ENCODE measurements at regions of chr17 and their contacts with region 1.

Region 1: DNA sequence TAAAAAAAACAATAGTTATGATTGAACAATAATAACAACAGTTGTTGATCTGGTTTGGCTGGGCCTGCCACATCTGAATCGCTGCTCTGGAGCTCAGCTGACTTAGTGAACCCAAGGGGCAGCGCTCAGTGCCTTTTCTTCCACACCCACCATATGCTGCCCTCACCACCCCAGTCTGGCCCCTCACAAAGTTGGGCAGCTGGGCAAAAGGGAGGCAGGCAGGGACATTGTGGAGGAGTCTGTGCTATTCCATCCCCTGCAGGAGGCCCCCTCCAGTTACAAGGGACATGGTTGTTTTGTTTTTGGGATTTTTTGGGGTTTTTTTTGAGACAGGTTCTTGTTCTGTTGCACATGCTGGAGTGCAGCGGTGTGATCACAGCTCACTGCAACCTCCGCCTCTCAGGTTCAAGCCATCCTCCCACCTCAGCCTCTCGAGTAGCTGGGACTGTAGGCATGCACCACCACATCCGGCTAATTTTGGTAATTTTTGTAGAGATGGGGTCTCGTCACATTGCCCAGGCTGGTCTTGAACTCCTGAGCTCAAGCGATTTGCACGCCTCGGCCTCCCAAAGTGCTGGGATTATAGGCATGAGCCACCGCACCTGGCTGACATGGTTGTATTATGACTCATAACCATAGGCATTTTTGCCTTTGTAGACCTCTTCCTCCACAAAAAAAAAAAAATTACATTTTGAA is 8.6 kb upstream of the PECAM1 start:
- DNase-seq: peak; percentile 50
- H3K4me3 ChIP-seq: no peak overlapping the region
- H3K27ac ChIP-seq: no peak overlapping the region
- H3K4me1 ChIP-seq: peaks cover 6% of the 10 kb centered on the region
- H3K27me3 ChIP-seq: no peaks in the 10 kb centered on the region
- CTCF ChIP-seq: no peak

Region 2: DNA sequence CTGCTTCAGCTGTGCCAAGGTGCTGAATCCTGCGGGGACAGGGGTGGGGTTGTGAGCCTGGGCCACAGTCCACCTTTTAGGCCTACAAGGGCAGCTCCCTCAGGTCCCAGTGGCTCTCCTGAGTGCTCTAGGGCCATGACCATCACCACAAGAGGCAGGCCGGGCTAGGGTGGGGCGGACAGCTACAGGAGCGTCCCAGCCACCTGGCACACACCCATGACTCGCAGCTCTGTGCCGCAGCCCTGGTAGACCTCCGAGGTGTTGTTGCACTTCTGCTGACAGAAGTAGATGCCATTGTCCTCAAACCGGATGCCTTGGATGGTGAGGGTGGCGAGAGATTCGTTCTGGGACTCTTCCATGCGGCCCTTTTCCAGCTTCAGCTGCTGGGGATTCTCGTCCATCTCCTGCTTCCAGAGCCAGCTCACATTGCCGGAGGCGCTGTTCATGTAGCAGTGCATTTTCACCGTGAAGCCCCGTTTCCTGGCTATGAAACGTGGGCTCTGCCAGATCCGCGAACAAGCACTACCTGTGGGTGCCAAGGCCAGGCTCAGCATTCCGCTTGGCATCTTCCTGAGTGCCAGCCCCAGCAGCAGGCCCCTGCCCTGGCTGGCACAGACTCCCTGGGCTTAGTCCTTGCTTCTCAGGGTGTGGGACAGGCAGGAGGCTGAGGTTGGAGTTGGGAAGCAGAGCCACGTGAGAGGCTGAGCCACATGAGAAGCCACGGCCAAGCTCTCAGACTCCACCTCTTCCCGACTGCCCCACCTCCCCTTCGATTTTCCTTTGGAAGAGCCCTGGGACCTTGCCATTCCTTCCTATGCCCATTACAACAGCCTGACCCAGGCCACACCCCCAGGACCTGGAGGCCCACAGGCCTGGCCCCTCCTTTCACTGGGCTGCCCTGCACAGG is 469.1 kb before region 1 on chr17:
- CTCF ChIA-PET with region 1: no interaction called
- dilution Hi-C with region 1: loop called (anchors 10 kb)
- in situ Hi-C with region 1: no loop called
- intact Hi-C with region 1: no loop called
- DNase-seq: no peak
- H3K4me3 ChIP-seq: no peak overlapping the region
- H3K27ac ChIP-seq: no peak overlapping the region
- H3K4me1 ChIP-seq: peaks cover 18% of the 10 kb centered on the region
- H3K27me3 ChIP-seq: no peaks in the 10 kb centered on the region
- CTCF ChIP-seq: no peak

Region 3: GRCh38 chr17:64063766-64064224 is 335.4 kb before region 1 on chr17:
- CTCF ChIA-PET with region 1: no interaction called
- dilution Hi-C with region 1: loop called (anchors 10 kb)
- in situ Hi-C with region 1: no loop called
- intact Hi-C with region 1: no loop called
- DNase-seq: no peak
- H3K4me3 ChIP-seq: no peak overlapping the region
- H3K27ac ChIP-seq: no peak overlapping the region
- H3K4me1 ChIP-seq: peaks cover 6% of the 10 kb centered on the region
- H3K27me3 ChIP-seq: no peaks in the 10 kb centered on the region
- CTCF ChIP-seq: peak; percentile 20 to 33

Region 4: DNA sequence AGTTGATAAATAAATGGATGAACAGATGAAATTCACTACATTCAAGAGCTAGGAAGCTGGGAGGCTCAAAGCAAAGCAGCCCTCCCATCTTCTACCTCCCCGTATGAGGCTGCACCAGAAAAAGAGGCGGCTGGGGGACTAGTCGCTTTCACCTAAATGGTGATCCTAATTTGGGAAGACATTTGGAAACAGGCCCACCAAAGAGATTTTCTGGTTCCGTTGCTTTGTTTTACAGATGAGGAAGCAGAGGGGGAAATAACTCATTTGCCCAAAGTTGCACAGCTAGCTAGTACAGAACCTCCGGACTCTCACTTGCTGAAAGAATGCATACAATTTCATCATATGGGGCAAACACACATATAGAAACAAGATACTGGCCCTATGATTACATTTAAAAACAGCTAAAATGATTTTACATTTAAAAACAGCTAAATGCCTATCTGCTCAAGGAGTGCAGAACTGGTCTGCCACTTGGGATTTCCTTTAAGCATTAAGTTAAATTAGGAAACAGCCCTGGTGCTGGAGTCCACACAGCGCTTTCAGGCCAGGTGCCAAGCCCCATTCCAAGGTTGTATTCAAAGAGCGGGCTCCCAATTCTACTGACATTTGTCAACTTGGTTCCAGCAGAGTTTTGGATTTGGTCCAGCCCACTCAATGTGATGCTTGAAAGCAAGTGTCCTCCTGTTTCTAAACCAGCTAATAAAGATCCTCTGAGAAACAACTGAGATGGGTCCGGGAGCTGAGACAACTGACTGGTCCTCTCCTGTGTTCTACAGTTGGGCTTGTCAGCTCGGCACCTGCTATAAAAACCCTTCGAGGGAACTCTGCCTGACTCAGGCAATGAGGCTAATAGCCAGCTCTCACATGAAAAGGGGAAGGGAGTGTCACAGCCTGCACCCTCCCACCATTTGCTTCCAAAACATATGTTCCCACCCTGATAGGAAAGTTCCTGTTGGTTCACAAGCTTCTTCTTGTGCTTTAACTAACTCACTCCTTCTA is 280.9 kb before region 1 on chr17:
- CTCF ChIA-PET with region 1: no interaction called
- dilution Hi-C with region 1: loop called (anchors 10 kb)
- in situ Hi-C with region 1: no loop called
- intact Hi-C with region 1: no loop called
- DNase-seq: no peak
- H3K4me3 ChIP-seq: no peak overlapping the region
- H3K27ac ChIP-seq: no peak overlapping the region
- H3K4me1 ChIP-seq: peaks cover 24% of the 10 kb centered on the region
- H3K27me3 ChIP-seq: no peaks in the 10 kb centered on the region
- CTCF ChIP-seq: no peak

Region 5: GRCh38 chr17:64240741-64241347 is 158.4 kb before region 1 on chr17:
- CTCF ChIA-PET with region 1: no interaction called
- dilution Hi-C with region 1: loop called (anchors 10 kb)
- in situ Hi-C with region 1: no loop called
- intact Hi-C with region 1: no loop called
- DNase-seq: peak; percentile 65
- H3K4me3 ChIP-seq: no peak overlapping the region
- H3K27ac ChIP-seq: peak overlapping the region; percentile 11
- H3K4me1 ChIP-seq: peaks cover 49% of the 10 kb centered on the region
- H3K27me3 ChIP-seq: no peaks in the 10 kb centered on the region
- CTCF ChIP-seq: no peak

Region 6: DNA sequence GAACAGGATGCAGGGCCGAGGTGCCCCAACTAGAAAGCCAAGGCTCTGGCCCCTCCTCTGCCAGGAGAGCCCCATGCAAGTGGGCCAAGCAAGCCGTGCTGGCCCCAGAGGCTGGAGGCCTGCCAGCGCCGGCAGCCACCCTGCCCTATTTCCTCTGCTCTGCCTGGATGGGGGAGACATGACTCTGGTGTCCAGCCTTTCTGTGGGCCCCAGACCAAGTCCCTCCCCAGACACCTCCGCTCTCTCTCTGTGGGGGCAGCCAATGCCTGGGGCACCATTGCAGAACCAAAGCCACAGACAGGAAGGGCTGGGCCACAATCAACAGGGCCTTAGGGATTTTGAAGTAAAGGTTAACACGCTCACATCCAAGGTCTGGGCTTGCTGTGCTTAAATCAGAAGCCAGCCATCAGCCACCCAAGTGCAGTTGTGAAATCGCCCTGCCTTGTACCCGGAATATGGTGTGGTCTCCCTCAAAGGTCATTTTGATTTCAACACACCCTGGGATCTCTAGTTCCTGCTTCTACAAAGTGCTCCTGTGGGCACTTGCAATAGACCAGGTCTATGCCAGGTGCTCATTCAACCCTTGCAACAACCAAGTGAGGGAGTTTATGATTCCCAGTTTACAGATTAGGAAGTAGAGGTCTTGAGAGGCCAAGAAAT is 72.7 kb before region 1 on chr17:
- CTCF ChIA-PET with region 1: no interaction called
- dilution Hi-C with region 1: loop called (anchors 5 kb)
- in situ Hi-C with region 1: no loop called
- intact Hi-C with region 1: no loop called
- DNase-seq: peak; percentile 77
- H3K4me3 ChIP-seq: no peak overlapping the region
- H3K27ac ChIP-seq: no peak overlapping the region
- H3K4me1 ChIP-seq: peaks cover 17% of the 10 kb centered on the region
- H3K27me3 ChIP-seq: no peaks in the 10 kb centered on the region
- CTCF ChIP-seq: no peak

Region 7: DNA sequence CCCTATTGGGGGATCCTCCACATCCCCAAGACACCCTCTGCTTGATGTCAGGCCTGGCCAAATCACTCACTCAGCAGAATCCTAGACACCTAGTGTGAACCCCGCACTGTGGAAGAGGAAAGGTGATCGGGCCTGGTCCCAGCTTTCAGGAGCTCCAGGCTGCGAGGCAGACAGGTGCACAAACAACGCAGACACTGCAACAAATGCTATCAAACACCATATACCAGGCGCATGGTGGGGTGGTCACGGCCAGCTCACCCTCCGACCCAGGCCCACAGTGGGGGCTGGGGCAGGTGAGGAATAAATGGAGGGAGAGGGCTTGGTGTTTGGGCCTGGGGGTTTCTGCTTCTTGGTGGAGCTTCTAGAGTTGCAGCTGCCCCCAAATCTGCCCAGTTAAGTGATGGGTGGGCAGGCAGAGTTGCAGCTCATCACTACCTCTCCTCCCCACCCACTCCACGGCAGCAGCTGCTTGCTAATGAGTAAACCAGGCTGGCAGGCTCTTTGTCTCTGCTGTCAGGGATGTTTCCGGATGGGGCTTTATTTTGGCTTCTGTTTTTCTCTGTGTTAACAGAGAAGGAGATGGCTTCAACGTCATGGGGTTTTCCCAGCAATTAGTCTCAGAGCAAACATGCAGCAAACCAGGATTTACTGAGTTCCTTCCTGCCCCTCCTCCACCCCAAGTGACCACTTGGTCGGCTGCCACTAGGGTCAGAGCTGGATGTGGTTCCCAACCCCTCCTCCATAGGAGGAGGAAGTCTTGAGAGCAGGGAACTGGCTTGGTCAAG is 55.2 kb before region 1 on chr17:
- CTCF ChIA-PET with region 1: no interaction called
- dilution Hi-C with region 1: no loop called
- in situ Hi-C with region 1: no loop called
- intact Hi-C with region 1: no loop called
- DNase-seq: peak; percentile 50
- H3K4me3 ChIP-seq: no peak overlapping the region
- H3K27ac ChIP-seq: no peak overlapping the region
- H3K4me1 ChIP-seq: no peaks in the 10 kb centered on the region
- H3K27me3 ChIP-seq: no peaks in the 10 kb centered on the region
- CTCF ChIP-seq: no peak

Region 8: DNA sequence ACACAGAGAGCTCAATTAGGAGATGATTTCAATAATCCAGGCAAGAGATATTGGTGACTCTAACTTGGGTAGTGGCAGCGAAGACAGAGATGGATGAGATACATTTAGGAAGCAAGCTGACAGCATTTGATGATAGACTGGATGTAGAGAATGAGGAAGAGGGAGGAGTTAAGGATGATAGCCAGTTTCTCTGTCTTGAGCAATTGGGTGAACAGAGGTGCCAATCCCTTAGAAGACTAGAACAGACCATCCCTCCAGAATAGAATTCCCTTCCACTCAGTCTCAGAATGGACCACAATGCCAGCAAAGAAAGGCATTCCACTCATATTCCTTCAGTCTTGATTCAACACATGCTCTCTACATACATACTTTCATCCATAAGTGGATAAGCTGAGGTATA is 80.4 kb after region 1 on chr17:
- CTCF ChIA-PET with region 1: no interaction called
- dilution Hi-C with region 1: loop called (anchors 5 kb)
- in situ Hi-C with region 1: no loop called
- intact Hi-C with region 1: no loop called
- DNase-seq: no peak
- H3K4me3 ChIP-seq: no peak overlapping the region
- H3K27ac ChIP-seq: no peak overlapping the region
- H3K4me1 ChIP-seq: no peaks in the 10 kb centered on the region
- H3K27me3 ChIP-seq: no peaks in the 10 kb centered on the region
- CTCF ChIP-seq: no peak